Activated T-helper 2 cell treated with anti-CD3 and anti-CD28 coated beads, Interferon-gamma antibody, Interleukin-2, Interleukin-4, amounts not matched to agents 10 μg/mL and 5 μg/mL and 100 μg/mL, durations not matched to agents 14 hours and 24 hours and 36 hours (primary cell): ENCODE measurements at regions of chr17 and their contacts with region 1.

Region 1: DNA sequence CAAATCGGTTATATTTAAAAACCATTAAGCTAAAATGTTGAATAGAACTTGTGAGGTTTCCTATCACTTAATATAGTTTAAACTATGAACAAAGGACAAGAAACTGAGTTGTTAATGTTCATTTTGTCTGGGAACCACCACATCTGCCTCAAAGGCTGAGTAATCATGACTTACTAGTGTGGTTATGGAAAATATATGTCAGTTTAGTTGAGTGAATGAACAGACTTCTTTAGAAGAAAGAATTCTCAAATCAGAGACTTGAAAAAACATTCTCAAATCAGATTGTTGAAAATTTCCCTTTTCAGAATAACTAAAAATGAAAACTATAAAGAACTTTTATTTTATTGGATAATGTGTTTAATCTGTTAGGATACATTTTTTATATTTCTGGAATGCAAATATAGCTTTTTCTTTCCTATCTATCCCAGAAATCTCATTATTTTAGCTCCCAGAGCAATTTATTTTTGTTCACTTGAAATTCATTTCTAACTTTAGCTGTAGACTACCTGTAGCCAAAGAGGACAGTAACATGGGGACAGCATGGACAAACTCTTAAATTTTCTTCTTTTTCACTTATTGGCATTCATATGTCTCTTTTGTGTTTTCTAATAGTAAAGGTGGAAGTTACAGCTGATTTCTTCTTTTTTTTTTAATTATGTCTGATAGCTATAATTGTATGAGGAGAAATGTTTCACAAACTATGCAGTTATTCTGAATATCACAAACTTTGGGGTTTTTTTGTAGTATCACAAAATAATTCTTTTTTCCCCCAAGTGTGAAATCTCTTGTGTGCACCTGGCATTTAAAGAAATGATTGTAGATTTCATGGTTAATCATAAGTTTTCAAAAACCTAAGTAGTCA is 55.3 kb downstream of the VMP1 start:
- DNase-seq: no peak
- H3K4me3 Mint-ChIP-seq: peak overlapping the region; percentile 59
- H3K27ac Mint-ChIP-seq: peak overlapping the region; percentile 95
- H3K4me1 Mint-ChIP-seq: peaks cover 47% of the 10 kb centered on the region
- H3K27me3 Mint-ChIP-seq: no peaks in the 10 kb centered on the region

Region 2: GRCh38 chr17:59837308-59838051 is 74.7 kb after region 1 on chr17:
- intact Hi-C with region 1: loop called (anchors 2 kb)
- DNase-seq: peak; percentile 77
- H3K4me3 Mint-ChIP-seq: peak overlapping the region; percentile 98
- H3K27ac Mint-ChIP-seq: peak overlapping the region; percentile 99
- H3K4me1 Mint-ChIP-seq: peaks cover 31% of the 10 kb centered on the region
- H3K27me3 Mint-ChIP-seq: peaks cover 4% of the 10 kb centered on the region